Activated CD4-positive, alpha-beta memory T cell treated with anti-CD3 and anti-CD28 coated beads, Interleukin-2, amount 10 ng/mL, durations not matched to agents 7 days and 5 days (primary cell): ENCODE measurements at regions of chr6 and their contacts with region 1.

Region 1: GRCh38 chr6:137589067-137589848 is 95.1 kb upstream of the OLIG3 start:
- DNase-seq: peak; percentile 79
- H3K4me3 Mint-ChIP-seq: no peak overlapping the region
- H3K27ac Mint-ChIP-seq: no peak overlapping the region
- H3K4me1 Mint-ChIP-seq: peaks cover 19% of the 10 kb centered on the region
- H3K27me3 Mint-ChIP-seq: peaks cover 22% of the 10 kb centered on the region

Region 2: DNA sequence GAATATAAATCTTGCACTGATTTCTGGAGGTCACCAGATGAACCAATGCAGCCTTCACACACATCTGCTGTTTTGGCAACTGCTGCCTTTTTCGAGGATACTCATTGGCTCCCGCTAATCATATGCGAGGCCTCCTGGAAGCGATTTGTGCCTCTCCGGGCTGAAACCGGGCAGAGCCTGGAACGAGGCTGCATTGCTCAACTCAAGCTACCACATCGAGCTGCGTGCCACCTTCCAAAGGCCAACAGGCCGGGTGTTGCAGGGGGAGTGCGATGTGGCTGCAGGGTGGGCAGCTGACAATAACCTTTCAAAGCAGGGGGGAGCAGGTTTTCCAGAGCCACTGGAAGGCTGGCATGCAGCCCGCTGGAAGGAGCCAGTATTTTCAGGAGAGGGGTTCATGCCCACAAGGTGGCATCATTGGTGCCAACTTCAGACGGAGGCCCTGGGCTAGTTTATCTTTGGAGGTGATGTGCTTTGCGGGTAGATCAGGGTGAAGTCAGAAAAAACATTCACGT is 247.5 kb before region 1 on chr6:
- CTCF ChIA-PET with region 1: interaction called, 25 read pairs
- POLR2A ChIA-PET with region 1: interaction called, 3 read pairs
- DNase-seq: peak; percentile 70
- H3K4me3 Mint-ChIP-seq: peak overlapping the region; percentile 67
- H3K27ac Mint-ChIP-seq: no peak overlapping the region
- H3K4me1 Mint-ChIP-seq: peaks cover 23% of the 10 kb centered on the region
- H3K27me3 Mint-ChIP-seq: peaks cover 6% of the 10 kb centered on the region

Region 3: DNA sequence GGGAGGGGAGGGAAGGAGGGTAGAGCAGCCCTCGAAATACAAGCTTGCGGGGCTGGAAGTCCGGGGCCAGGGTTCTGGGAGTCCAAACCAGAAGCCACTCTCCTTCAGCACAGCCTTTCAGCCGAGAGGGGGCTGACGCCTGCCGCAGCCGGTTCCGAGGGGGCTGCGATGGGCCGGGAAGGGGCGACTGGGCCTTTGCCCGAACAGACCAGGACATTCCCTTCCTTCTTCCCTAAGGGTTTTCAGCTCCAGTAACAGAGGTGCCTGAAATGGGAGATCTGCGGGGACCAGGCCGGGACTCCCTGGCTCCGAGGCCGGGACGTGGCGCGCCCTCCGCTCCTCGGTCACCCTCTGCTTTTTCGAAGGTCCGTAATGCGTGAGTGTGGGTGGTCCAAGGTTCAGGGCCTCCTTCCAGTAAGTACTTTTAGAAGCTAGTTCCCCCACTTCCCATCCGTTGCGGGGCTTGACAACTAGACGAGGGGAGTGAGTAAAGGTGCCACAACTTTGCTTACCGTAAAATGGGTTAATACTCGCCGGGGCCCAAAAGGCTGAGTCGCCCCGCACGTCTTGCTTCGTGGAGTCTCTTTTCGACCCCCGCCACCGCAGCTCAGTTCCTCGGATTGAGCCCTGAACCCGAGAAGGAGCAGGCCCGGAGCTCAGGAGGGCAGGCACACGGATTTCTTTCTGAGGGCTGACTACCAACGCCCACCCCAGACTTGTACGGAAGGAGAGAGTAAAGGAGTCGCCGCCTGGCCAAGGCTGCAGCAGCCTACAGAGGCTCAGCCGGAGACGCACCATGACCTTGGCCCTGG is 92.1 kb before region 1 on chr6:
- CTCF ChIA-PET with region 1: interaction called, 12 read pairs
- POLR2A ChIA-PET with region 1: no interaction called
- DNase-seq: no peak
- H3K4me3 Mint-ChIP-seq: peak overlapping the region; percentile 64
- H3K27ac Mint-ChIP-seq: no peak overlapping the region
- H3K4me1 Mint-ChIP-seq: peaks cover 54% of the 10 kb centered on the region
- H3K27me3 Mint-ChIP-seq: peaks cover 84% of the 10 kb centered on the region

Region 4: GRCh38 chr6:137571854-137572253 is 17.4 kb before region 1 on chr6:
- CTCF ChIA-PET with region 1: interaction called, 16 read pairs
- POLR2A ChIA-PET with region 1: no interaction called
- DNase-seq: peak; percentile 75
- H3K4me3 Mint-ChIP-seq: no peak overlapping the region
- H3K27ac Mint-ChIP-seq: no peak overlapping the region
- H3K4me1 Mint-ChIP-seq: no peaks in the 10 kb centered on the region
- H3K27me3 Mint-ChIP-seq: peaks cover 37% of the 10 kb centered on the region